ENCODE measurements at regions of chr7 and their contacts with region 1.

Region 1: GRCh38 chr7:77759294-77759889 is 38.8 kb downstream of the TMEM60 start:
- DNase-seq: peak in 2 of 4 donors; percentile 46 to 75
- ATAC-seq: peak; percentile 92
- H3K4me3 ChIP-seq: no peak overlapping the region
- H3K27ac ChIP-seq: no peak overlapping the region
- H3K4me1 ChIP-seq: peaks cover 0 to 30% of the 10 kb centered on the region in 2 donors
- H3K27me3 ChIP-seq: no peaks in the 10 kb centered on the region
- CTCF ChIP-seq: peak; percentile 73

Region 2: DNA sequence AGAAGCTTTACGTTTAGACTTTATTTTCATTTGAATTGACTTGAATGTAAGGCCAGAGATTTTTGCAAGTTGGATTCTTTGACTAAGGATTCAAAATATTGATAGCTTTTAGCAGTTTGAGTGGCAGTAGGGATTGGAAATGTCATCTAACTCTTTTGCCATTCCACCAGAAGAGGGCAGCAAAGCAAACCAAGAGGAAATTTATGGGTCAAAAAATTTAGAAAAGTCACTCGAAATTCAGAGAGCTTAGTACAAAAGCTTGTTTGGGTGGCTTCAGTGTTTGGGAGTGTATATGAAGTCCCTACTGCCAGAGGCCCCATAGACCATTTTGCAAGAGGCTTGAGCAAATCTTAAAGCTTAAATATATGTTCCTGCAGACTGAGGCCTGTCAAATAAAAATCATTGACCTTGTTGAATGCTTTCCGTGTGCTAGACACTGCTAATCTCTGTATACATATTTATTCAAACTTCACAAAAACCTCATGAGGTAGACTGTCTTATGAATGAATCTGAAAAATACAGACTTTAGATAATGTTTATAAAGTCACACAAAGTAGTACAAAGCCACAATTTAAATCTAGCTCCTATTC is 107.7 kb before region 1 on chr7:
- intact Hi-C with region 1: loop called in 1 of 2 experiments (anchors 5 kb)
- DNase-seq: peak in 1 of 4 donors; percentile 43
- ATAC-seq: peak; percentile 11
- H3K4me3 ChIP-seq: no peak overlapping the region
- H3K27ac ChIP-seq: no peak overlapping the region
- H3K4me1 ChIP-seq: peaks cover 0 to 14% of the 10 kb centered on the region in 2 donors
- H3K27me3 ChIP-seq: no peaks in the 10 kb centered on the region
- CTCF ChIP-seq: peak; percentile 55 to 69